ENCODE measurements at regions of chr7 and their contacts with region 1.

Region 1: DNA sequence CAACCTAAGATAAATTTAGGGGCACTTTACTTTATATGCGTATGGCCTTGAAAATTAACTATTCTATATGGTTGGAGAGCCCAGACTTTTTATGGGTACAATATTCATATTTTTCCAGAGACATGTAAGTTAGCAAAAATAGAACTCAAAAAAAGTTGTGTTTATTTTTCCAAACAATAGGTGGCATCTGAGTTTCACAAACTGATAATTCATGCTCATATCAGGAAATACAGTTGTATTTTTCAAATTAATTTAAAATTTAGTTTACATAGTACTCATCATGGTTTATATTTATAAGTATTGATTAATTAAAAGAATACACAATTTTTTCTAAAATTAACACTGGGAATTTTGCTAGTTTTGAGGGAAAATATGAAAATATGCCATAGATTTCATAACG is 34.6 kb downstream of the ANKRD7 start:
- DNase-seq: no peak
- H3K4me3 Mint-ChIP-seq: no peak overlapping the region
- H3K27ac Mint-ChIP-seq: no peak overlapping the region
- H3K4me1 Mint-ChIP-seq: no peaks in the 10 kb centered on the region
- H3K27me3 Mint-ChIP-seq: peaks cover 23% of the 10 kb centered on the region
- CTCF ChIP-seq: peak; percentile 47

Region 2: GRCh38 chr7:118352854-118353453 is 93.8 kb after region 1 on chr7:
- CTCF ChIA-PET with region 1: interaction called, 7 read pairs
- POLR2A ChIA-PET with region 1: no interaction called
- intact Hi-C with region 1: loop called (anchors 5 kb)
- DNase-seq: peak; percentile 42
- H3K4me3 Mint-ChIP-seq: no peak overlapping the region
- H3K27ac Mint-ChIP-seq: no peak overlapping the region
- H3K4me1 Mint-ChIP-seq: peaks cover 6% of the 10 kb centered on the region
- H3K27me3 Mint-ChIP-seq: no peaks in the 10 kb centered on the region
- CTCF ChIP-seq: peak; percentile 46

Region 3: GRCh38 chr7:118590107-118590506 is 331.0 kb after region 1 on chr7:
- CTCF ChIA-PET with region 1: interaction called, 3 read pairs
- POLR2A ChIA-PET with region 1: no interaction called
- intact Hi-C with region 1: loop called (anchors 1 kb)
- DNase-seq: peak; percentile 53
- H3K4me3 Mint-ChIP-seq: no peak overlapping the region
- H3K27ac Mint-ChIP-seq: no peak overlapping the region
- H3K4me1 Mint-ChIP-seq: no peaks in the 10 kb centered on the region
- H3K27me3 Mint-ChIP-seq: peaks cover 70% of the 10 kb centered on the region
- CTCF ChIP-seq: peak; percentile 41

Region 4: GRCh38 chr7:118731854-118732253 is 472.7 kb after region 1 on chr7:
- CTCF ChIA-PET with region 1: no interaction called
- POLR2A ChIA-PET with region 1: no interaction called
- intact Hi-C with region 1: loop called (anchors 2 kb)
- DNase-seq: peak; percentile 3
- H3K4me3 Mint-ChIP-seq: no peak overlapping the region
- H3K27ac Mint-ChIP-seq: no peak overlapping the region
- H3K4me1 Mint-ChIP-seq: no peaks in the 10 kb centered on the region
- H3K27me3 Mint-ChIP-seq: peaks cover 28% of the 10 kb centered on the region
- CTCF ChIP-seq: no peak

Region 5: DNA sequence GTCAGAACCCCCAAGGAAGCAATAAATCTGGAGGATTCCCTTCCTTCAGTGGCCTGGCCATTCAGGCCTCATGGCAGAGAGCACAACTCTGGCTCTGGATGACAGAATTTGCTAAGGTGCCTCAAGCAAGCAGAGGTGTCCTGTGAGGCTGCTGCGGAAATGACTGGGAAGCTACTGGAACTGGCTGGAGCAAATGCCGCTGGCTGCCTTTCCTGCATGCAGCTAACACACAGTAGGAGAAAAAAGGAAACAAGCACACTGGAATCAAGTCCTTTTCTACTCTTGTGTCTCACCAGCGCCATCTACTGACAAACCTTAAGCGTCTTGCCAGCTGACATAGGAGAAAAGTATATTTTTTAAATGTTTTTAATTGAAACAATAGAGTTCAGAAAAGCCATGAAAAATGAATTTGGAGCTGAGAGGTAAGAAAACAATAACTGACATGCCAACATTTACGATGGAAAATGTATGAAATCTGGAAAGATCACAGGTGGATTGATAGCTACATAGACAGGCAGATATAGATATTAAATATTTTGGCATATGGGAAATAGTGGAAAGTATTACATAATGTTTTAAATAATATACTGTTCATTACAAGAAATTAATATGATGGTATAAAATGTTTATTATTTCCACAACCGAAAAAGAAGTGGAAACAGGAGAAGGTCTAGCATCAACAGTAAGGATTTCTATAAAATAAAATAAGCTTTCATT is 917.0 kb after region 1 on chr7:
- CTCF ChIA-PET with region 1: interaction called, 6 read pairs
- POLR2A ChIA-PET with region 1: no interaction called
- intact Hi-C with region 1: loop called (anchors 5 kb)
- DNase-seq: peak; percentile 79
- H3K4me3 Mint-ChIP-seq: no peak overlapping the region
- H3K27ac Mint-ChIP-seq: no peak overlapping the region
- H3K4me1 Mint-ChIP-seq: no peaks in the 10 kb centered on the region
- H3K27me3 Mint-ChIP-seq: peaks cover 75% of the 10 kb centered on the region
- CTCF ChIP-seq: peak; percentile 78